A549 (cell line): ENCODE measurements at regions of chr2 and their contacts with region 1.

Region 1: GRCh38 chr2:85878719-85879385 is 9.9 kb downstream of the ST3GAL5 start:
- DNase-seq: no peak
- ATAC-seq: peak; percentile 34 to 61; a peak in 3 of 6 replicates
- H3K4me3 ChIP-seq: no peak overlapping the region
- H3K27ac ChIP-seq: peak overlapping the region in 1 of 2 experiments; percentile 9; a peak in 1 of 6 replicates
- H3K4me1 ChIP-seq: peaks cover 33% of the 10 kb centered on the region
- CTCF ChIP-seq: no peak
- EP300 ChIP-seq: no peak
- POLR2A ChIP-seq: no peak
- RAD21 ChIP-seq: no peak

Region 2: DNA sequence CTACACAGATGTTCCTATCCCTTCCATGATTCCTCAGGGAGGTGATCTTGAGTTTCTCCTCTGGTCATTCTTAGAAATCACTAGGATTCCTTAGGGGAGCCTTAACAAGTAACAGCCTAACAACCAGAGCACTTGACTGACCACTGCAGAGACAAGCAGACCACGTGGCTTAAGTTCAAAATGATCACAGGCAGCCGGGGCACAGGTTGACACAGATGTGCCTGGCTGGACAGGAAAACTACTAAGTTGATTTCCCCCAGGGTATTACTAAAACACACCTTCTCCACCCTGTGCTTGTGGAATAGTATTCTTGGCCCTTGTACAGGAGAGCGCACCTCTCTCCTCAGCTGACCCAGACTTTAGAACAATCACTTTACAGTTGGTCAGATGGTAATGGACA is 20.0 kb before region 1 on chr2:
- CTCF ChIA-PET with region 1: interaction called, 10 read pairs
- POLR2A ChIA-PET with region 1: no interaction called
- DNase-seq: no peak
- ATAC-seq: no peak; a peak in 1 of 6 replicates
- H3K4me3 ChIP-seq: no peak overlapping the region
- H3K27ac ChIP-seq: no peak overlapping the region
- H3K4me1 ChIP-seq: no peaks in the 10 kb centered on the region
- CTCF ChIP-seq: no peak
- EP300 ChIP-seq: no peak
- POLR2A ChIP-seq: no peak
- RAD21 ChIP-seq: no peak

Region 3: GRCh38 chr2:85865539-85866164 is 13.2 kb before region 1 on chr2:
- CTCF ChIA-PET with region 1: interaction called, 38 read pairs
- POLR2A ChIA-PET with region 1: no interaction called
- DNase-seq: no peak
- ATAC-seq: peak in 1 of 2 experiments; percentile 13; a peak in 1 of 6 replicates
- H3K4me3 ChIP-seq: no peak overlapping the region
- H3K27ac ChIP-seq: no peak overlapping the region
- H3K4me1 ChIP-seq: no peaks in the 10 kb centered on the region
- CTCF ChIP-seq: no peak
- EP300 ChIP-seq: no peak
- POLR2A ChIP-seq: no peak
- RAD21 ChIP-seq: no peak

Region 4: DNA sequence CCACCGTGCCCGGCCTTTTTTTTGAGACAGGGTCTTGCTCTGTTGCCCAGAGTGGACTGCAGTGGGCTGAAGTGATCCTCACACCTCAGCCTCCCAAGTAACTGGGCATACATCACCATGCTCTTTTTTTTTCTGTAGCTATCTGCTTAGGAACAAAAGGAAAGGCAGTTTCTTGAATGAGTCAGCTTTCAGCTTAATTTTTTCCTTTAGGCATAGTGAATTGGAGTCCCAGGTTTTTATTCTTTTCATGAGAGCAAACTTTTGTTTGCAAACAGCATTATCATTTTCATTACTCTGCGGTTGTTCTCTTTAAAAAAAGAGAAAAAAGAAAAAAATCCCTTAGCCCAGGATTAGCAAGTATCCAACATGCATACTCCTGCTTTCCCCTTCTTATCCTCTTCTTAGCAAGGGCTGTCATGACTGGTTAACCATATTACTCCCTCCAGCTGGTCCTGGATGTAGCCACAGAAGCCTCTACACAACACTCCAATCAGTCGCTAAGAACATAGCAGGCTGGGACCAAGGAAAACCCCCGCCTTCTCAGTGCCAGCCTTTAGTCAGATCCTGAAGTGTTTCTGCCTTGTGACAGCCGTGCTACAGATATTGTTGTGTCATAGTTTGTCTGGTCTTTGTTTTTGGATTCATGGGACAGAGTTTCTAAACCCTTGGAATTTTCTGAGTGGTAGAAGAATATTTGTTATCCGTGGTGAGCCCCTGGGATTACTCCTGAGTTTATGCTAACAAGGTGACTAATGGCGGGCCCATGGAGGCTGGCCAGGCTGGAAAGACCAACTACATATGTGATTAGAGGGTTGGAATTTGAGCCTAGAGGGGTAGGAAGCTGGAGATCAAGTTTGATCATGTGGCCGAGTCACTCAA is 33.2 kb after region 1 on chr2:
- CTCF ChIA-PET with region 1: no interaction called
- POLR2A ChIA-PET with region 1: no interaction called
- DNase-seq: peak in 1 of 2 experiments; percentile 62
- ATAC-seq: peak; percentile 69 to 72
- H3K4me3 ChIP-seq: no peak overlapping the region
- H3K27ac ChIP-seq: peak overlapping the region; percentile 51 to 78
- H3K4me1 ChIP-seq: peaks cover 51% of the 10 kb centered on the region
- CTCF ChIP-seq: no peak
- EP300 ChIP-seq: no peak
- POLR2A ChIP-seq: no peak
- RAD21 ChIP-seq: no peak